CD4-positive, alpha-beta T cell (primary cell): ENCODE measurements at regions of chrX and their contacts with region 1.

Region 1: GRCh38 chrX:107205770-107206696 is at the starts of genes DNAAF6 and NUP62CL:
- DNase-seq: peak; percentile 35 to 86 (median 58)
- ATAC-seq: peak; percentile 92
- H3K4me3 ChIP-seq: peak within 1 kb of the TSS; percentile 70
- H3K4me3 Mint-ChIP-seq: peak within 1 kb of the TSS; percentile 88
- H3K27ac ChIP-seq: no peak within 1 kb of the TSS
- H3K27ac Mint-ChIP-seq: peak within 1 kb of the TSS; percentile 30
- H3K4me1 ChIP-seq: peaks cover 9% of the 10 kb centered on the region
- H3K4me1 Mint-ChIP-seq: peaks cover 12% of the 10 kb centered on the region
- H3K27me3 ChIP-seq: no peaks in the 10 kb centered on the region
- H3K27me3 Mint-ChIP-seq: no peaks in the 10 kb centered on the region
- CTCF ChIP-seq: no peak
- total RNA-seq, gene DNAAF6: not detected
- total RNA-seq, gene NUP62CL: 0.74 to 0.81 TPM

Region 2: GRCh38 chrX:106999002-106999975 is 206.7 kb before region 1 on chrX:
- CTCF ChIA-PET with region 1: no interaction called
- POLR2A ChIA-PET with region 1: no interaction called
- intact Hi-C with region 1: loop called in 1 of 2 experiments (anchors 10 kb)
- DNase-seq: peak; percentile 5 to 69 (median 36)
- ATAC-seq: peak; percentile 74
- H3K4me3 ChIP-seq: peak overlapping the region; percentile 62
- H3K4me3 Mint-ChIP-seq: peak overlapping the region; percentile 88
- H3K27ac ChIP-seq: no peak overlapping the region
- H3K27ac Mint-ChIP-seq: peak overlapping the region; percentile 73
- H3K4me1 ChIP-seq: peaks cover 8% of the 10 kb centered on the region
- H3K4me1 Mint-ChIP-seq: peaks cover 13% of the 10 kb centered on the region
- H3K27me3 ChIP-seq: no peaks in the 10 kb centered on the region
- H3K27me3 Mint-ChIP-seq: no peaks in the 10 kb centered on the region
- CTCF ChIP-seq: peak; percentile 49

Region 3: GRCh38 chrX:107123750-107124149 is 82.3 kb before region 1 on chrX:
- CTCF ChIA-PET with region 1: no interaction called
- POLR2A ChIA-PET with region 1: no interaction called
- intact Hi-C with region 1: loop called (anchors 5 to 10 kb)
- DNase-seq: no peak
- ATAC-seq: no peak
- H3K4me3 ChIP-seq: no peak overlapping the region
- H3K4me3 Mint-ChIP-seq: no peak overlapping the region
- H3K27ac ChIP-seq: no peak overlapping the region
- H3K27ac Mint-ChIP-seq: no peak overlapping the region
- H3K4me1 ChIP-seq: no peaks in the 10 kb centered on the region
- H3K4me1 Mint-ChIP-seq: peaks cover 6% of the 10 kb centered on the region
- H3K27me3 ChIP-seq: no peaks in the 10 kb centered on the region
- H3K27me3 Mint-ChIP-seq: no peaks in the 10 kb centered on the region
- CTCF ChIP-seq: no peak

Region 4: DNA sequence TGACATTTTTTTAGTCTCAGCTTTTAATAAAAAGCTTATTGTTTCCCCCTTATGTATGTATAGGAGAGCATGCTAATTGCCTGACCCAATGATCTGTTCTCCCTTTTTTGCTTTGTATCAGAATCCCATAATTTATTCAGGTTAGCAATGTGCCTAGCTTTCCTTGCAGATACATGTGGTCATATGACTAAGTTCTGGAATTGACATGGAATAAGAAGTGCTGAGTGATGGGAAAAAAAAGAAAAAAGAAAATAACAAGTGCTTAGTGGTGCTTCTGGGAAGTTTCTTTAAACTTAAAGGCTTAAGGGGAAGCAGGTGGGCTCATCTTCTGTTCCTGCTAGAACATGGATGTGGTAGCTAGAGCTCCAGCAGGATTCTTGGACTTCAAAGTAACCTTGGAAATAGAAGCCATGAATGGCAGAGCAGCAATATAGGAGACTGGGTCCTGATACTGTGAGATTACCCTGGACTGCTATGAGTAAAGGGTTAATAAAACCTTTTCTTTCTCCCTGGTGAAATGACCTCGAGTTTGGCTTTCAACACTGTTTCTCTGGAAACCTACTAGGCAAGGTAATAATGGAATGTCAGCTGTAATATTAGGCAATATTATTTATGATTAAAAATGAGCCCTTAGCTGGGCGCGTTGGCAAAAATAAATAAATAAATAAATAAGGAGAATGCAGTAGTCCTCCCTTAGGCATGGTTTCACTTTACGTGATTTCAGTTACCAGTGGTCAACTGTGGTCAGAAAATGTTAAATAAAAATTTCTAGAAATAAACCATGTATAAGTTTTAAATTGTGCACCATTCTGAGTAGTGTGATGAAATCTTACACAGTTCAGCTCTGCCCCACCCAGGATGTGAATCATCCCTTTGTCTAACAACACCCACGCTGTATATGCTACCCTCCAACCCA is 70.7 kb before region 1 on chrX:
- CTCF ChIA-PET with region 1: no interaction called
- POLR2A ChIA-PET with region 1: no interaction called
- intact Hi-C with region 1: no loop called
- DNase-seq: peak in 4 of 14 experiments; percentile 9 to 24 (median 16)
- ATAC-seq: no peak
- H3K4me3 ChIP-seq: no peak overlapping the region
- H3K4me3 Mint-ChIP-seq: no peak overlapping the region
- H3K27ac ChIP-seq: no peak overlapping the region
- H3K27ac Mint-ChIP-seq: no peak overlapping the region
- H3K4me1 ChIP-seq: no peaks in the 10 kb centered on the region
- H3K4me1 Mint-ChIP-seq: no peaks in the 10 kb centered on the region
- H3K27me3 ChIP-seq: no peaks in the 10 kb centered on the region
- H3K27me3 Mint-ChIP-seq: no peaks in the 10 kb centered on the region
- CTCF ChIP-seq: no peak